ENCODE measurements at regions of chr13 and their contacts with region 1.

Region 1: DNA sequence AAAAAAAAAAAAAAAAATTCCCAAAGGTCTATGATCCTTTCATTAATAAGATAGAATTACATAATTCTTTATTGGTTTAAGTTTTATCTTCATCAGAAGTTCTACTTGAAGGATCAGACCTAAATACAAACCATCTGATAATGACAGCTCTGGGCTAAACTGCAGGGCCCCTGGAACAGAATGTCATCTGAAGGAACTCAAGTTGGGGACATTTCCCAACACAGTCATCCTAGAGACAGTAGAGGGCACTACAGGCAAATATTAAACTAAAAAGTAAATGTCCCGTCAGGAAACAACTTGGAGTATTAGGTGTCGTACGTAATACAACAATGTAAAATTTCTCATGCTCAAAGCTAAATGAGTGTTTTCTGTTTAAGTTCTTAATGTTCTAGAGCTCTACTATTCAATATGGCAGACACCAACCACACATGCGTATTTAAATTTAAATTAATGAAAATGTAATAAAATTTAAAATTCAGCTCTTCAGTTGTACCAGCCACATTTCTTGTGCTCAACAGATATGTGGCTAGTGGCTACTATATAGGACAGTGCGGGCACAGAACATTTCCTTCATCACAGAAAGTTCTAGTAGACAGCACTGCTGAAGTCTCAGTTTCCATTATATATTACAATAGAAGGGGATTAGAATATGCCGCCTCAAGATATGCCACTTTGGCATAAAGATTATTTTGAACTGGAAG is 21.8 kb upstream of the NAXD start:
- DNase-seq: peak in 4 of 9 donors; percentile 16 to 40 (median 30)
- ATAC-seq: peak; percentile 77
- H3K4me3 ChIP-seq: no peak overlapping the region
- H3K4me3 Mint-ChIP-seq: no peak overlapping the region
- H3K27ac ChIP-seq: no peak overlapping the region
- H3K27ac Mint-ChIP-seq: no peak overlapping the region
- H3K4me1 ChIP-seq: no peaks in the 10 kb centered on the region
- H3K4me1 Mint-ChIP-seq: peaks cover 0 to 4% (median 0%) of the 10 kb centered on the region in 7 donors
- H3K27me3 ChIP-seq: no peaks in the 10 kb centered on the region
- H3K27me3 Mint-ChIP-seq: peaks cover 0 to 20% (median 0%) of the 10 kb centered on the region in 5 donors

Region 2: DNA sequence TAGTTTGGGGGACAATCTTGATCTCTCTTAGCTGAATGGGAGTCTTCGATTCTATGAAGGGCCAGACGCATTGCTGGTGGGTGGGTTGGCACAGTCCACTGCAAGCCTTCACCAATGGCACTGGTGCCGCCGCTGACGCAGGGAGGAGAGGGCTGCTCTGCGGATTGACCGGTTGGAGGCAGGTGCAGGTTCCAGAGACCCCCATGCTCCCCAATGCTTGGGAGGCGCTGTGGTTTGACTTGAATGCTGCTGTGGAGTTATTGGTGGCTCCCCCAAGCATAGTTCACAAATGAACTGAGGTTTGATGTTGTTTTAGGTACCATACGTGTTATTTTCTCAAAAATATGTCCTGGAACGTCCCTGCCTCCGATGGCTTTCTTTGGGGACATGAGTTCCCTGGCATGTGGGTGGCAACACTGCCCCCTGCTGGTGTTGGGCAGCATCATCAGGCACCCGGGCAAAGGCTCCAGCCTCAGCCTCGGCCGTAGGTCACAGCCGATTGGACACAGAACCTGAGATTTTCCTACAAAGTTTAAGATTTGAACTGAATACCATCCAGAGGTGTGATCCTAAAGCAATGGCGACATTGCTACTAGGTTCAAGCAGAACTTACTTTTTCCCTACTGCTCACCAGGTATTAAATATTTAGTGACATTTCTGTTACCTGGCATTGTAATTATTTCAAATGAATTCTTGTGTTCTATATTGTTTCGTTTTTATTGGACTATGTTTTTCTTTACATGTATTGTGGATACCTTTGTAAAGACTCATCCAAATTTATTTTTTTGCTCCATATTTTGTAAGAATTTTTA is 225.8 kb after region 1 on chr13:
- CTCF ChIA-PET with region 1: interaction called, 9 read pairs
- POLR2A ChIA-PET with region 1: interaction called, 3 read pairs
- intact Hi-C with region 1: loop called in 1 of 2 experiments (anchors 1 kb)
- DNase-seq: peak; percentile 39 to 78 (median 66)
- ATAC-seq: peak; percentile 95
- H3K4me3 ChIP-seq: no peak overlapping the region
- H3K4me3 Mint-ChIP-seq: peak overlapping the region in 3 of 10 donors; percentile 16 to 21 (median 19)
- H3K27ac ChIP-seq: no peak overlapping the region
- H3K27ac Mint-ChIP-seq: peak overlapping the region in 1 of 9 donors; percentile 72
- H3K4me1 ChIP-seq: no peaks in the 10 kb centered on the region
- H3K4me1 Mint-ChIP-seq: peaks cover 0 to 17% (median 14%) of the 10 kb centered on the region in 7 donors
- H3K27me3 ChIP-seq: no peaks in the 10 kb centered on the region
- H3K27me3 Mint-ChIP-seq: peaks cover 0 to 13% (median 0%) of the 10 kb centered on the region in 5 donors

Region 3: GRCh38 chr13:110925023-110925612 is 331.5 kb after region 1 on chr13:
- CTCF ChIA-PET with region 1: no interaction called
- POLR2A ChIA-PET with region 1: no interaction called
- intact Hi-C with region 1: loop called in 1 of 2 experiments (anchors 1 kb)
- DNase-seq: peak in 3 of 9 donors; percentile 5 to 15 (median 7)
- ATAC-seq: no peak
- H3K4me3 ChIP-seq: no peak overlapping the region
- H3K4me3 Mint-ChIP-seq: no peak overlapping the region
- H3K27ac ChIP-seq: no peak overlapping the region
- H3K27ac Mint-ChIP-seq: no peak overlapping the region
- H3K4me1 ChIP-seq: no peaks in the 10 kb centered on the region
- H3K4me1 Mint-ChIP-seq: peaks cover 0 to 12% (median 4%) of the 10 kb centered on the region in 7 donors
- H3K27me3 ChIP-seq: no peaks in the 10 kb centered on the region
- H3K27me3 Mint-ChIP-seq: peaks cover 56 to 68% (median 58%) of the 10 kb centered on the region in 5 donors

Region 4: DNA sequence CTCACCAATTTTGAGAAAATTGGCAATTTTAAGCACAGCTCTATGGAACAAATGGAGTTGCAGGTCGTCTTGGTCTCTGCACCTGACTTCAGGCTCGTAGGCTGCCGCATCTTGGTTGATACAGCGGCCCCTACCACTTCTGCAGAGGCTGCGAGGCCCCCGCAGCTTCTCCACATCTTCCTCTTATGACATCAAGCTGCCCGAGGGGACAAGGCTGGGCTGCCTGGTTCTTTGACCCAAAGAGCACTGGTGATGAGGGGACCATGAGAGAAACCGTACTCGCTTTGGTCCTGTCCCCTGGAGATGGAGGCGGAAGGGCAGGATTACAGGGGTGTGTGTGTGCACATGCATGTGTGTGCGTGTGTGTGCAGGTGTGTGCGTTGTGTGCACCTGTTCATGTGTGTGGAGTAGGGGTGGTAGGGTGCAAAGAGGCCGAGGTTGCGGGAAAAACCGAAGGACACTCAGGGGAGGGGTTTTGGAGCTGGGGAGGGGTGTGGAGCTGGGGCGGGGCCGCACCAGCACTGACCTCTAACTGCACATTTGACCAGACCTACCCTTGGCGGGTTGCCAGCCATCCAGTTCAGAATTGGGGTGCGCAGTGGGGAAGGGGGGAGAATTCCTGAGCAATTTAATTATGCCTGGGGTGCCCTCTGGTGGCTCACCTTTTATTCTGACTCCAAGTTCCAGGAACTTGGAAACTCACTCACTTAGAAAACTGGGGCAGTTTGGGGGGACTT is 456.4 kb after region 1 on chr13:
- CTCF ChIA-PET with region 1: no interaction called
- POLR2A ChIA-PET with region 1: no interaction called
- intact Hi-C with region 1: loop called in 1 of 2 experiments (anchors 2 kb)
- DNase-seq: no peak
- ATAC-seq: no peak
- H3K4me3 ChIP-seq: no peak overlapping the region
- H3K4me3 Mint-ChIP-seq: no peak overlapping the region
- H3K27ac ChIP-seq: no peak overlapping the region
- H3K27ac Mint-ChIP-seq: no peak overlapping the region
- H3K4me1 ChIP-seq: no peaks in the 10 kb centered on the region
- H3K4me1 Mint-ChIP-seq: peaks cover 0 to 11% (median 0%) of the 10 kb centered on the region in 7 donors
- H3K27me3 ChIP-seq: no peaks in the 10 kb centered on the region
- H3K27me3 Mint-ChIP-seq: peaks cover 4 to 19% (median 18%) of the 10 kb centered on the region in 5 donors

Region 5: GRCh38 chr13:111114362-111115060 is 520.9 kb after region 1 on chr13:
- CTCF ChIA-PET with region 1: no interaction called
- POLR2A ChIA-PET with region 1: no interaction called
- intact Hi-C with region 1: loop called in 1 of 2 experiments (anchors 5 kb)
- DNase-seq: peak in 7 of 9 donors; percentile 10 to 38 (median 30)
- ATAC-seq: peak; percentile 55
- H3K4me3 ChIP-seq: peak overlapping the region; percentile 65
- H3K4me3 Mint-ChIP-seq: peak overlapping the region; percentile 85 to 93 (median 90)
- H3K27ac ChIP-seq: no peak overlapping the region
- H3K27ac Mint-ChIP-seq: peak overlapping the region in 5 of 9 donors; percentile 29 to 65 (median 51)
- H3K4me1 ChIP-seq: peaks cover 0 to 5% of the 10 kb centered on the region in 2 donors
- H3K4me1 Mint-ChIP-seq: peaks cover 4 to 19% (median 17%) of the 10 kb centered on the region in 7 donors
- H3K27me3 ChIP-seq: peaks cover 9 to 19% of the 10 kb centered on the region in 2 donors
- H3K27me3 Mint-ChIP-seq: peaks cover 74 to 87% (median 78%) of the 10 kb centered on the region in 5 donors

Region 6: GRCh38 chr13:111228262-111229144 is 634.9 kb after region 1 on chr13:
- CTCF ChIA-PET with region 1: no interaction called
- POLR2A ChIA-PET with region 1: no interaction called
- intact Hi-C with region 1: loop called in 1 of 2 experiments (anchors 10 kb)
- DNase-seq: no peak
- ATAC-seq: no peak
- H3K4me3 ChIP-seq: no peak overlapping the region
- H3K4me3 Mint-ChIP-seq: no peak overlapping the region
- H3K27ac ChIP-seq: no peak overlapping the region
- H3K27ac Mint-ChIP-seq: no peak overlapping the region
- H3K4me1 ChIP-seq: no peaks in the 10 kb centered on the region
- H3K4me1 Mint-ChIP-seq: peaks cover 27 to 68% (median 55%) of the 10 kb centered on the region in 7 donors
- H3K27me3 ChIP-seq: no peaks in the 10 kb centered on the region
- H3K27me3 Mint-ChIP-seq: no peaks in the 10 kb centered on the region

Region 7: DNA sequence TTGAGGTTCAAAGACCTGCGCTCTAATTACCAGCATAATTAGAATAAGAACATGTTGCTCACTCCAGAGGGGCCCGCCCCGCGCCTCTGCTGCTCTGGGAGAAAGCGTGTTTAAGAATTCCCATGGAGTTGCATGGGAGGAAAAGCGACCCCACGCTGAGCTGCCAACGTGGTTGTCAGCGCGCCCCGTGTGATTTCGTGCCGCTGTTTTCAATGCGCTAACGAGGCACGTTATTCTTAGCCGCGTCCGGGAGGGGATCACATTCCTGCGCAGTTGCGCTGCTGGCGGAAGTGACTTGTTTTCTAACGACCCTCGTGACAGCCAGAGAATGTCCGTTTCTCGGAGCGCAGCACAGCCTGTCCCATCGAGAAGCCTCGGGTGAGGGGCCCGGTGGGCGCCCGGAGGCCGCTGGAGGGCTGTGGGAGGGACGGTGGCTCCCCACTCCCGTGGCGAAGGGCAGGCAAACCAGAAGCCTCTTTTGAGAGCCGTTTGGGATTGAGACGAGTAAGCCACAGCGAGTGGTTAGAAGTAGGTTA is 1299.6 kb after region 1 on chr13:
- CTCF ChIA-PET with region 1: no interaction called
- POLR2A ChIA-PET with region 1: no interaction called
- intact Hi-C with region 1: no loop called
- DNase-seq: no peak
- ATAC-seq: no peak
- H3K4me3 ChIP-seq: no peak overlapping the region
- H3K4me3 Mint-ChIP-seq: no peak overlapping the region
- H3K27ac ChIP-seq: no peak overlapping the region
- H3K27ac Mint-ChIP-seq: no peak overlapping the region
- H3K4me1 ChIP-seq: no peaks in the 10 kb centered on the region
- H3K4me1 Mint-ChIP-seq: no peaks in the 10 kb centered on the region
- H3K27me3 ChIP-seq: peaks cover 0 to 2% of the 10 kb centered on the region in 2 donors
- H3K27me3 Mint-ChIP-seq: peaks cover 37 to 76% (median 61%) of the 10 kb centered on the region in 5 donors